ENCODE measurements at regions of chr6 and their contacts with region 1.

Region 1: GRCh38 chr6:156250593-156250992 is 526.6 kb upstream of the ARID1B start:
- DNase-seq: no peak
- H3K4me3 Mint-ChIP-seq: peak overlapping the region; percentile 23
- H3K27ac Mint-ChIP-seq: peak overlapping the region; percentile 31
- H3K4me1 Mint-ChIP-seq: peaks cover 10% of the 10 kb centered on the region
- H3K27me3 Mint-ChIP-seq: no peaks in the 10 kb centered on the region

Region 2: GRCh38 chr6:156174031-156174890 is 76.3 kb before region 1 on chr6:
- intact Hi-C with region 1: loop called (anchors 1 kb)
- DNase-seq: no peak
- H3K4me3 Mint-ChIP-seq: no peak overlapping the region
- H3K27ac Mint-ChIP-seq: no peak overlapping the region
- H3K4me1 Mint-ChIP-seq: peaks cover 10% of the 10 kb centered on the region
- H3K27me3 Mint-ChIP-seq: no peaks in the 10 kb centered on the region

Region 3: DNA sequence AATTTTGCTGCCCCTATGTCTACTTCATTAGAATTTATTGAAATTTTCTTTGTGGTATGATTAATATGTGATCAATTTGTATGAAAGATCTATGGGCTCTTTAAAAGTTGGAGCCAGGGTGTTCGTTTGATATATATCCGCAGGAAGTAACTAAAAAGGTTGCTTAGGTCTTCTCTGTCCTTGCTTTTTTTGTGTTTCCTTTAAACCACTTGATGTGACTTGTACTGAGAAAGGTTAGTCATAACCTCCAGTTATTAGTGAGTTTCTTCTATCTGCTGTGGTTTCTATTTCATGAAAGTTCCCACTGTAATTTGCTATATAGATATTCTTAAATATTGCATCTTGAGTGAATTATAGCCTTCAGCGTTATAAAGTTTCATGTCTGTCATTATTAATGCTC is 58.7 kb before region 1 on chr6:
- intact Hi-C with region 1: loop called (anchors 5 kb)
- DNase-seq: no peak
- H3K4me3 Mint-ChIP-seq: no peak overlapping the region
- H3K27ac Mint-ChIP-seq: no peak overlapping the region
- H3K4me1 Mint-ChIP-seq: peaks cover 9% of the 10 kb centered on the region
- H3K27me3 Mint-ChIP-seq: no peaks in the 10 kb centered on the region

Region 4: GRCh38 chr6:156852132-156852857 is 601.7 kb after region 1 on chr6:
- intact Hi-C with region 1: loop called (anchors 10 kb)
- DNase-seq: no peak
- H3K4me3 Mint-ChIP-seq: no peak overlapping the region
- H3K27ac Mint-ChIP-seq: no peak overlapping the region
- H3K4me1 Mint-ChIP-seq: peaks cover 32% of the 10 kb centered on the region
- H3K27me3 Mint-ChIP-seq: no peaks in the 10 kb centered on the region